PC-3 (cell line): ENCODE measurements at regions of chr3 and their contacts with region 1.

Region 1: GRCh38 chr3:107927361-107928083 is 163.3 kb downstream of the CD47 start:
- DNase-seq: peak; percentile 91
- ATAC-seq: peak; percentile 96
- H3K4me3 ChIP-seq: peak overlapping the region; percentile 76
- H3K27ac ChIP-seq: peak overlapping the region; percentile 18
- H3K4me1 ChIP-seq: peaks cover 6% of the 10 kb centered on the region; the same call in 1 of the 2 replicates
- H3K27me3 ChIP-seq: no peaks in the 10 kb centered on the region
- CTCF ChIP-seq: peak; percentile 97

Region 2: GRCh38 chr3:107676469-107677309 is 250.8 kb before region 1 on chr3:
- CTCF ChIA-PET with region 1: interaction called, 5 read pairs
- POLR2A ChIA-PET with region 1: no interaction called
- intact Hi-C with region 1: loop called (anchors 5 kb)
- DNase-seq: peak; percentile 72
- ATAC-seq: peak; percentile 68
- H3K4me3 ChIP-seq: no peak overlapping the region
- H3K27ac ChIP-seq: no peak overlapping the region
- H3K4me1 ChIP-seq: no peaks in the 10 kb centered on the region
- H3K27me3 ChIP-seq: no peaks in the 10 kb centered on the region
- CTCF ChIP-seq: peak; percentile 76

Region 3: DNA sequence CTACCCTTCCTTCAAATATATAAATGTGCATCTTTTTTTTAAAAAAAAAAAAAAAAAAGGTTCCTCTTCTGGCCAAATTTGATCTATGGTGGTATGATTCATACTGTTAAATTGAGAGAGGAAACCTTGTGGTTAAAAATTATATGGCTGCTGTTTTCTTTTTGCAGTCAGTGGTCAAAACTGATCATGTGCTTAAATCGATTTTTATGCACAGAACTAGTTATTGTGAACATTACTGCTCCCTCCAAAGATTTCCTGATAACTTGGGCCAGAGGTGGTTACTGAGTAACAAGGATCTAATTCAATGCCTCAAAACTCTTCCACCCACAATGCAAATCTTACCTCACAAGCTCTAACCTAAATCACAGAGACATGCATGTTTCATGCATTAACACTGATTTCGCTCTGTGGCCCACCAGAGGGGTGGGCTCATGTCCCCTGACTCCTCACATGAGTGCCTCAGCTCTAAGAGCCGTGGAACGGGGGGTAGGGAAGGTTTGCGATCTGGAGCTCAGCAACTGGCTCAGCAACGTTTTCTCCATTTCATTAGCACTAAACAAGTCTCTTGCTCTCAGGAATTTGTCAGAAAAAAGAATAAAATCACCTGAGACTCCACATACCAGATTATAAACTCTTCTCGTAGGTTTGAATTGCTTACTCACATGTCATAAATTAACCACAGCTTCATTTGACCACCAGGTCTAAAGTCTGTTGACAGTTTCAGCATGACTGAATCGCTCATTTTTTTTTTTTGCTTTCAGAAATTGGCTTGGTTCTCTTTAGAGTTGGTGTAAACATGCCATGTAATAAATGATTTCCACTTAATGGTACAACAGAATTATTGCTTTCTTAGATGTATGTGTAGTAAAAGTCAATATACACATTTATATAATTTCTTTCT is 117.1 kb before region 1 on chr3:
- CTCF ChIA-PET with region 1: interaction called, 3 read pairs
- POLR2A ChIA-PET with region 1: interaction called, 8 read pairs
- intact Hi-C with region 1: loop called (anchors 5 kb)
- DNase-seq: peak; percentile 75
- ATAC-seq: peak; percentile 88
- H3K4me3 ChIP-seq: peak overlapping the region; percentile 34; the same call in 1 of the 2 replicates
- H3K27ac ChIP-seq: peak overlapping the region; percentile 75
- H3K4me1 ChIP-seq: peaks cover 16% of the 10 kb centered on the region
- H3K27me3 ChIP-seq: no peaks in the 10 kb centered on the region
- CTCF ChIP-seq: no peak

Region 4: DNA sequence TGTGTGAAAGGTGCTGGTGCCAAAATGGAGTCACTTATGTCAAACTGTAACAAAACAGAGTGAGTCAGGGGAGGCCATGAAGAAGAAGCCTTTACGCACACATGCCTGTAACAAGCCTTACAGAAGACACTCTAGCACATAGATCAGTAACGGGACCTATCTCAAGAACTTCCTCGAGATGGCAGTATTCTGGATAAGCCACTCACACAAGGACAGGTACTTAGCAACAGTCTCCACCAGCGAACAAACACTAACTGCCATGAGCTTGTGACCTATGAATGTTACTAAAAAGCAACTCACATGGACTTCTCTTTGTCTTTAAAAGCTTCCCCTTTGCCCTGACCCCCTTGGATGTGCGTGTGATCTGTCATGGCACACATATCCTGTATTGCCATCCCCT is 71.8 kb before region 1 on chr3:
- CTCF ChIA-PET with region 1: interaction called, 6 read pairs
- POLR2A ChIA-PET with region 1: no interaction called
- intact Hi-C with region 1: loop called (anchors 1 kb)
- DNase-seq: peak; percentile 64
- ATAC-seq: peak; percentile 93
- H3K4me3 ChIP-seq: no peak overlapping the region
- H3K27ac ChIP-seq: no peak overlapping the region
- H3K4me1 ChIP-seq: no peaks in the 10 kb centered on the region
- H3K27me3 ChIP-seq: no peaks in the 10 kb centered on the region
- CTCF ChIP-seq: peak; percentile 69

Region 5: DNA sequence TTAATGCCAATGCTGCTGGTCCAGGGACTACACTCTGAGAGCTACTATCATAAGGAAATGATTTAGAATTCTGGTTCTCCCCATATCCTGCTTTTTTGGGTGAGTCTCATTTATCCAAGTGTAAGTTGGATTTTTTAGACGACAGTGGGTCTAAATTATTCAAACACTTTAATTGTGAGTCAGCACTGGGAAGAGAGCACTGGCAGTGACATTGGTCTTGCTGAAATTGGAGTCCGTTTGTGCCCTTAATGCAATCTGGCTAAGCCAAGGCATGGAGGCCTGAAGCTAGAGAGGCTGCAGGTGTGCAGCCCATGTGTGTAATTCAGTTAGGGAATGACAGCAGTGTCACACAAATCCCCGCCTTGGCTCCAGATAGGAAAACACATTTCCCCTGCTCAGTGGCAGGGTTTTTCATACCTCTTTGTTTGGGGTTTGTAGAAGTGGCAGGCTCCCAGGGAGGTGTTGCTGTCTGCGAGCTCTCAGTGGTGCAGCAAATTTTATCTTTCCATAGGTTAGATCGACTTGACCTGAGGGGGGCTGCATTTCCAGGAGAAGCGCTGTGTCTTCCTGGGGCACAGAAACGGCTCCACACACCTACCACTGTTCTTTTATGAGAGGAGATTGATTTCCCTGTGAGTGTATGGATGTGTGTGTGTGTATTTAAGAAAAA is 34.4 kb before region 1 on chr3:
- CTCF ChIA-PET with region 1: no interaction called
- POLR2A ChIA-PET with region 1: no interaction called
- intact Hi-C with region 1: no loop called
- DNase-seq: no peak
- ATAC-seq: no peak
- H3K4me3 ChIP-seq: no peak overlapping the region
- H3K27ac ChIP-seq: no peak overlapping the region
- H3K4me1 ChIP-seq: 0 out of 2 replicates have a peak, but pooled peaks cover 4% of the 10 kb centered on the region
- H3K27me3 ChIP-seq: no peaks in the 10 kb centered on the region; the same call in 1 of the 2 replicates
- CTCF ChIP-seq: no peak

Region 6: DNA sequence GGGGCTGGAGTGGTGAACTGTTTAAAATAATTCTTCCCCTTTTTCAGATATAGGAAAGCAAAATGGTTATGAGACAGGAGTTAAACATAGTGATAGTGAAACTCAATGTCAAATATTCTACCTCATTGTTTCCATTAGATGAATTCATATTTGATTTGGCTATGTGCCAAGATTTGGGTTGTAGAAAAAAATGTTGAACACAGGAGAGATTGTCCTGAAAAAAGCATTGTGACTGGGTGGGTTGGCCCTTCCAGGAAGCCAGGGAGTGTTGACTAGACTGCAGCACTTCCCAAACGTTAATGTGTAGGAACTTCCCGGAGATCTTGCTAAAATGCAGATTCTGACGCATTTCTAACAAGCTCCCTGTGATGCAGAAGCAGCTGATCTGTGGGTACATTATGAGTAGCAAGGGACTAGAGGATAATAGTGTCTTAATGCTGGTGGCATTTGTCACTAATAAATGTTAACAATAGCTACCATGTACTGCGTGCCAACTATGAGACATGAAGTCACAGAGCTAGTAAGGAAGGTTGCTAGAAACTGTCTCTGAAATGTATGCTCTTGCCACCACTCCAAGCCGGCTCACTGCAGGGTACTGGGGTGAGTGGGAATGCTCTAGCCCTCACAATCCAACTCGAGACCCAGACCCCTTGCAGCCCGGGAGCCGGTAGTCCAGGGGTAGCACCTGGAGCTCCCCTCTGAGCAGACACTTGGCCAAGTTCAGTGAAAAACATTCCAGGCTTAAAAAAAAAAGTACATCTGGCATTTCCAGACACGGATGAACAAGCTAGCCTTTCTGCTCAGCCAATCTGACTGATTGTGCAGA is 42.7 kb after region 1 on chr3:
- CTCF ChIA-PET with region 1: no interaction called
- POLR2A ChIA-PET with region 1: no interaction called
- intact Hi-C with region 1: loop called (anchors 2 kb)
- DNase-seq: peak; percentile 90
- ATAC-seq: peak; percentile 85
- H3K4me3 ChIP-seq: no peak overlapping the region
- H3K27ac ChIP-seq: peak overlapping the region; percentile 58
- H3K4me1 ChIP-seq: peaks cover 30% of the 10 kb centered on the region
- H3K27me3 ChIP-seq: no peaks in the 10 kb centered on the region
- CTCF ChIP-seq: no peak

Region 7: GRCh38 chr3:108221911-108222852 is 294.7 kb after region 1 on chr3 and contains the start of gene IFT57:
- CTCF ChIA-PET with region 1: no interaction called
- POLR2A ChIA-PET with region 1: no interaction called
- intact Hi-C with region 1: loop called (anchors 5 kb)
- DNase-seq: peak; percentile 98
- ATAC-seq: peak; percentile 89
- H3K4me3 ChIP-seq: peak within 1 kb of the TSS; percentile 89
- H3K27ac ChIP-seq: no peak within 1 kb of the TSS; the same call in 1 of the 2 replicates
- H3K4me1 ChIP-seq: peaks cover 42% of the 10 kb centered on the region
- H3K27me3 ChIP-seq: no peaks in the 10 kb centered on the region
- CTCF ChIP-seq: no peak
- total RNA-seq, gene IFT57: 46.0 and 54.0 TPM in 2 replicates